ENCODE measurements at regions of chr12 and their contacts with region 1.

Region 1: DNA sequence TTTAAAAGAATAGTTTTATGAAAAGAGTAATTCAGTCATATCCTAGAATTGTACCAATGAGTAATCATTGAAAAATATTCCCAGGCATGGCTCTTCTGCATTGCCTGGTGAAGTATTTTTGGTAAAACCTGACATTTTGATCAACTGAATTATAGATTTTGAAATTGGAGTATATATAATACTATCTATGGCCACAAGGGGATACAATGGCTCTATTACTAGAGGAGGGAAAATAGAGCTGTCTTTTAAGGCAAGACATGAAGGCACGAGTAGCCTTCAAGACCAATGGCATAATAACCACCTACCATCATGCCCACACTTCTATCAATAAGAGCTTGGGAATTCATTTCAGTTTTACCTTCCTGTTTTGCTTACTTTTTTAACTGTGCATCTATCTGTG is 1241.4 kb upstream of the TMEM132C start:
- DNase-seq: no peak
- ATAC-seq: peak; percentile 71
- H3K4me3 ChIP-seq: no peak overlapping the region
- H3K27ac ChIP-seq: no peak overlapping the region
- H3K4me1 ChIP-seq: no peaks in the 10 kb centered on the region
- H3K27me3 ChIP-seq: no peaks in the 10 kb centered on the region
- CTCF ChIP-seq: peak; percentile 25 to 46 (median 45); a peak in 4 of 6 replicates
- POLR2A ChIP-seq: no peak
- RAD21 ChIP-seq: peak; percentile 67

Region 2: GRCh38 chr12:127280393-127281275 is 255.1 kb after region 1 on chr12:
- CTCF ChIA-PET with region 1: no interaction called
- POLR2A ChIA-PET with region 1: no interaction called
- RAD21 ChIA-PET with region 1: no interaction called
- intact Hi-C with region 1: loop called (anchors 10 kb)
- DNase-seq: peak; percentile 62
- ATAC-seq: peak; percentile 99
- H3K4me3 ChIP-seq: no peak overlapping the region
- H3K27ac ChIP-seq: no peak overlapping the region
- H3K4me1 ChIP-seq: no peaks in the 10 kb centered on the region; a peak in 1 of 4 replicates
- H3K27me3 ChIP-seq: 0 out of 2 replicates have a peak, but pooled peaks cover 4% of the 10 kb centered on the region
- CTCF ChIP-seq: peak; percentile 100
- POLR2A ChIP-seq: no peak
- RAD21 ChIP-seq: peak; percentile 77

Region 3: GRCh38 chr12:127355061-127355841 is 329.7 kb after region 1 on chr12:
- CTCF ChIA-PET with region 1: no interaction called
- POLR2A ChIA-PET with region 1: no interaction called
- RAD21 ChIA-PET with region 1: no interaction called
- intact Hi-C with region 1: loop called (anchors 10 kb)
- DNase-seq: no peak
- ATAC-seq: peak; percentile 89
- H3K4me3 ChIP-seq: no peak overlapping the region
- H3K27ac ChIP-seq: no peak overlapping the region
- H3K4me1 ChIP-seq: no peaks in the 10 kb centered on the region
- H3K27me3 ChIP-seq: no peaks in the 10 kb centered on the region
- CTCF ChIP-seq: peak in 2 of 3 experiments; percentile 58 to 62; a peak in 4 of 6 replicates
- POLR2A ChIP-seq: no peak
- RAD21 ChIP-seq: peak; percentile 52

Region 4: DNA sequence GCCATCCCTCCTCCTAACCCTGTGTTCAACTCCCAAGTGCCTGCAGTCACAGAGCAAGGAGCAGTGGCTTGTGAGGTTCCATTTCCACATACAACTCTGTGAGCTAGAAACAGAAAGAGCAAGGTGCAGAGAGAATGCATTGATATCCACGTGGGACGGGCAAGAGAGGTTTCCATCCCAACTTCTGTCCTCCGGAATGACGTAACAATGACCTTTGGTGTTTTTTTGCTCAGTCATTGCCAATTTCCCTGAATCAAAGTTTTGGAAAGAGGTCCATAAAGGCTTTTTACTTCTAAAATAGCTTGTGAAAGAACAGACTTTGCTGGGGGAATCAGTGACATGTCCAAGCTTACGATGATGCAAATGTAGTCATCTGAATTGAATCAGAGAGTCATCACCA is 854.0 kb after region 1 on chr12:
- CTCF ChIA-PET with region 1: no interaction called
- POLR2A ChIA-PET with region 1: no interaction called
- RAD21 ChIA-PET with region 1: no interaction called
- intact Hi-C with region 1: no loop called
- DNase-seq: no peak
- ATAC-seq: no peak
- H3K4me3 ChIP-seq: no peak overlapping the region
- H3K27ac ChIP-seq: no peak overlapping the region
- H3K4me1 ChIP-seq: no peaks in the 10 kb centered on the region
- H3K27me3 ChIP-seq: no peaks in the 10 kb centered on the region
- CTCF ChIP-seq: no peak
- POLR2A ChIP-seq: no peak
- RAD21 ChIP-seq: no peak

Region 5: GRCh38 chr12:128966203-128966810 is 1940.8 kb after region 1 on chr12:
- CTCF ChIA-PET with region 1: no interaction called
- POLR2A ChIA-PET with region 1: no interaction called
- RAD21 ChIA-PET with region 1: no interaction called
- intact Hi-C with region 1: no loop called
- DNase-seq: no peak
- ATAC-seq: no peak
- H3K4me3 ChIP-seq: no peak overlapping the region
- H3K27ac ChIP-seq: no peak overlapping the region
- H3K4me1 ChIP-seq: no peaks in the 10 kb centered on the region
- H3K27me3 ChIP-seq: no peaks in the 10 kb centered on the region
- CTCF ChIP-seq: no peak
- POLR2A ChIP-seq: no peak
- RAD21 ChIP-seq: no peak